ENCODE measurements at regions of chr19 and their contacts with region 1.

Region 1: DNA sequence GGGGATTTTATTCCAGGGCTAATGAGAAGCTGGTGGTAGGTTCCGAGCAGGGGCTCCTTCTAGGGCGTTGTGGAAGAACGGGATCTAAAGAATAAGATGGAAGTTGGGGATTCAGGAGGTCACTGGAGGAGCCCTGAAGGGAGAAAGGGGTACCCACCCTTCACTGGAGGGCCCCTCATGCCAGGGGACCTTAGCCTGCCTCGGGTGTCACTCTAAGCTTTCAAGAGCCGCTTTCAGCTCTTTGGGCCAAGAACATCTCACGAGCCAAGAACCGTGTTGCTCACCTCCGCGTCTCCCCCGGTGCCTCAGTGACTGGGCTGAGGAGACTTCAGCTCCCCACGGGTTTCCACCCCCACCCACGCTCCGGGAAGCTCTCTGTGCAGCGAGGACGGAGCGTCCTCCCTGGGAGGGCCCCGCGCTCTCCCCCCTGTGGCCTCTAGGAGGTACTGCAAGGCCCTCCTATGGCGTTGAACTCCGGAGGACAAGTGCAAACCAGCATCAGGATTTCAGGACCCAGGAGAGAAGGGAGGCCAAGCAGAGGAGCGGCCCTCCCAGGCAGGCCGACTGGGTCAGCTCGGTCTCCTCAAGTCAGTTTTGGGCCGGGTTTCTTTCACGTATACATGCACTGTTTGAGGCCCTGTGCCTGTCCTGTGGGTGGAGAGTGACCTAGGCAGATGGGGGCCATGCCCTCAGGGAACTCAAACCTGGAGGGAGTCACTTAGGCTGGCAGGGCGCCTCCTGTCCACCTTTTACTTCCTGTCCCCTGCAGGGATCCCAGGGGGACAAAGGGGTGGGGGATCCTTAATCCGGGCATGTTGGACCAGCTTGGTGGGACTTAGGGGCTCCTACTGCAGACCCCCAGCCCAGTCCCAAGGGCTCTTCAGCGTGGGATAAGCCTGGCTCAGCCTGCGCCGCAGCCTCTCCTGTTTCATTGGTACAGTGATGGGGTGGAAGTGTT is 5.1 kb upstream of the KRTDAP start:
- DNase-seq: peak; percentile 64 to 68 (median 66)
- ATAC-seq: peak; percentile 94
- H3K4me3 ChIP-seq: no peak overlapping the region
- H3K27ac ChIP-seq: no peak overlapping the region
- H3K4me1 ChIP-seq: peaks cover 7% of the 10 kb centered on the region
- H3K27me3 ChIP-seq: no peaks in the 10 kb centered on the region
- CTCF ChIP-seq: peak; percentile 92 to 99 (median 95)
- POLR2A ChIP-seq: no peak

Region 2: DNA sequence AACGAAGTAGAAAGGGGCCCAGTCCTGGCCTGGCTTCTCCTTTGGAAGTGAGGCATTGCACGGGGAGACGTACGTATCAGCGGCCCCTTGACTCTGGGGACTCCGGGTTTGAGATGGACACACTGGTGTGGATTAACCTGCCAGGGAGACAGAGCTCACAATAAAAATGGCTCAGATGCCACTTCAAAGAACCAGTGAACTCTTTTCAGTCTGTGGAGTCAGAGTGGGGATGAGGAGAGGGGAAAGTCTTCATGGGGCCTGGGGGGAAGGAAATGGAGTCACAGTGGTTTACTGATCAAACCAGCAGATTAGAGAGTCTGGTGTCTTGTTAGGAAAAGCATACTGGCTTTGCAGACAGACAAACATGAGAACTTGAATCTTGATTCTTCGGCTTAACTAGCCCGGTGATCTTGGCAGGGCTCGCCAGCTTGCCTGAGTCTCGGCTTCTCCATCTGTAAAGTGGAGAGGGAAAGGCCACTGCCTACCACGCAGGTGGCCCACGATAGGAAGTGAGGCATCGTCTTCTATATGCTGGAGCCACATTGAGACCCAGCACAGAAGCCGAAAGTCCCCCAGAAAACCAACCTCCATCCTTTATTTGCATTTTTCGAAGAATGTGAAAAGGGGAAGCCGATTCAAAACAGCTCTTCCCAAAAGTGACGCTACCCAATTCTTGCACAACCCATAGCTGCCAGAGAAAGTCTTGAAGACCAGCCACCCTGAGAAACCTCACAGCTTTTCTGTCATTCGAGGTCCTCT is 148.0 kb before region 1 on chr19 and contains the start of gene FFAR1:
- intact Hi-C with region 1: loop called (anchors 10 kb)
- DNase-seq: peak in 2 of 4 donors; percentile 7 to 68
- ATAC-seq: no peak
- H3K4me3 ChIP-seq: no peak within 1 kb of the TSS
- H3K27ac ChIP-seq: peak within 1 kb of the TSS in 1 of 4 donors; percentile 14
- H3K4me1 ChIP-seq: no peaks in the 10 kb centered on the region
- H3K27me3 ChIP-seq: peaks cover 0 to 6% of the 10 kb centered on the region in 2 donors
- CTCF ChIP-seq: no peak
- POLR2A ChIP-seq: no peak
- total RNA-seq, gene FFAR1: 1.6 to 2.3 TPM

Region 3: DNA sequence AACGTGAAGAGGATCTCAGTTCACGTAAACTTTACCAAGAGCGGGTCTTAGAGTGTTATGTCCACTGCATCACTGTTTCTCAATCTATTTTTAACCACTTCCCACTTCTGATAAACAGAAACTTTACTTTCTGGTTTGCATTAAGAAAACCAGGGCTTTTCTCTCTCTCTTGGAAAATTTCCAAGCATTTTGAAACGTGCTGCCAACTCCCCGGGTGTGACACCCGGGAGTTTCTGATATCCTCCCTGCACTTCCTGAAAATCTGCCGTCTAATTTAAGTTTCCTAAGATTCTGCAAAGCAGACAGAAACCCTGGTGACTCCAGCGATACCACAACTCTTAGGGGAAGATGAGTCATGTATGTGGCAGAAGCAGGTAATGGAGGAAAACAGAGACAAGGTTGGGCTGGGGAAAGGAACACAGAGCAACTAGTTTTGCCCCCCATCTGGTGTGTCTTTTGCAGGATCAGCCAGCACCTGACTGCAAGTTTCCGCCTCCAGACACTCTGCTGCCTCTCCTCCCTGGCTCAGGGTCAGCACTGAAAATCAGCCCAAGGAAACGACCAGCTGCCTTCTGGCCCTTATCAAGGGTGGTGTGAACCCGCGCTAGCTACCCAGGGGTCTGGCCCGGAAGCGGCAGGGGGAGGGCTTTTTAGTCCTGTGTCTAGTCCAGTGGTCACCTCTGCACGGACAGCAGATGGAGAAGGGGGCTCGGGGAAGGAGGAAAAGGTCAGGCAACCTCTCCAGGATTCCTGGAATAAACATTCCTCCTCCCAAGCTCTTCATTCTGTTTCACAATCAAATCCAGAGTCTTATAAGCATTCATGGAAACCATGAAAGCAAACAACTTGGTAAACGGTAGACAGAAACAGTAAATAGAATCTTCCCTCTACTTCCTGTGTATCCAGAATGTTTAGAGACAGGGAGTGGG is 58.6 kb before region 1 on chr19:
- intact Hi-C with region 1: no loop called
- DNase-seq: peak in 3 of 4 donors; percentile 42 to 60 (median 56)
- ATAC-seq: peak; percentile 25
- H3K4me3 ChIP-seq: no peak overlapping the region
- H3K27ac ChIP-seq: peak overlapping the region; percentile 61 to 72 (median 68)
- H3K4me1 ChIP-seq: peaks cover 53% of the 10 kb centered on the region
- H3K27me3 ChIP-seq: no peaks in the 10 kb centered on the region
- CTCF ChIP-seq: no peak
- POLR2A ChIP-seq: no peak

Region 4: DNA sequence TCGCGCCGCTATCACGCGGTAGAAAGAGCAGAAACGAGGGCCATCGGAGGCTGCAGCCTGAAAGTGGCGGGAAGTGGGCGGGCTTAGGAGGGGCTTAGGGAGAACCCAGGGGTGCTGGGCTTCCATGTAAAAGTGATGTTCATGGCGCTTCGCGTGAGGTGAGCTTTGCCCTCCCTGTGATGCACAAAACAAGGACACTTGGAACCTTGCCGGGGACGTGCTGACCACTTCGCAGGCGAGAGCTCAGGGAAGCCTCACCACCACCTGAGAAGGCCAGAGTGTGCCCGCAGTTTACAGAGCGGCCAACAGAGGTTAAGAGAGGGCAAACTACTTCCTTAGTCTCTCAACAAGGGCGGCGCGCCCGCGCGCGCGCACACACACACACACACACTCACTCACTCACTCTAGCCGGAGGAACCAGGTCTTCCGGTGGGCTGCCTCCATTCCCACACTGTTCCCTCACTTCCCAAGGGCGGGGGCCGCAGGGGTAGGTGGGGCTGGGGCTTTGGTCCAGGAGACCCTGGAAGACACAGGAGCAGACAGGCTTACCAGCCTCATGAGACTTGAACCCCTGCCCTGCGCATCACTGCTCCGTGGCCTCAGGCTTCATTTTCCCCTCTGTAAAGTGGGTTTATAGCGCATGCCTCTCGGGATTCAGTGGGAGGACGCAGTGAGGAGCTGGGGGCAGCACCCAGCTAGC is 38.6 kb after region 1 on chr19:
- intact Hi-C with region 1: no loop called
- DNase-seq: peak in 3 of 4 donors; percentile 33 to 59 (median 46)
- ATAC-seq: no peak
- H3K4me3 ChIP-seq: no peak overlapping the region
- H3K27ac ChIP-seq: no peak overlapping the region
- H3K4me1 ChIP-seq: peaks cover 9% of the 10 kb centered on the region
- H3K27me3 ChIP-seq: no peaks in the 10 kb centered on the region
- CTCF ChIP-seq: no peak
- POLR2A ChIP-seq: no peak

Region 5: DNA sequence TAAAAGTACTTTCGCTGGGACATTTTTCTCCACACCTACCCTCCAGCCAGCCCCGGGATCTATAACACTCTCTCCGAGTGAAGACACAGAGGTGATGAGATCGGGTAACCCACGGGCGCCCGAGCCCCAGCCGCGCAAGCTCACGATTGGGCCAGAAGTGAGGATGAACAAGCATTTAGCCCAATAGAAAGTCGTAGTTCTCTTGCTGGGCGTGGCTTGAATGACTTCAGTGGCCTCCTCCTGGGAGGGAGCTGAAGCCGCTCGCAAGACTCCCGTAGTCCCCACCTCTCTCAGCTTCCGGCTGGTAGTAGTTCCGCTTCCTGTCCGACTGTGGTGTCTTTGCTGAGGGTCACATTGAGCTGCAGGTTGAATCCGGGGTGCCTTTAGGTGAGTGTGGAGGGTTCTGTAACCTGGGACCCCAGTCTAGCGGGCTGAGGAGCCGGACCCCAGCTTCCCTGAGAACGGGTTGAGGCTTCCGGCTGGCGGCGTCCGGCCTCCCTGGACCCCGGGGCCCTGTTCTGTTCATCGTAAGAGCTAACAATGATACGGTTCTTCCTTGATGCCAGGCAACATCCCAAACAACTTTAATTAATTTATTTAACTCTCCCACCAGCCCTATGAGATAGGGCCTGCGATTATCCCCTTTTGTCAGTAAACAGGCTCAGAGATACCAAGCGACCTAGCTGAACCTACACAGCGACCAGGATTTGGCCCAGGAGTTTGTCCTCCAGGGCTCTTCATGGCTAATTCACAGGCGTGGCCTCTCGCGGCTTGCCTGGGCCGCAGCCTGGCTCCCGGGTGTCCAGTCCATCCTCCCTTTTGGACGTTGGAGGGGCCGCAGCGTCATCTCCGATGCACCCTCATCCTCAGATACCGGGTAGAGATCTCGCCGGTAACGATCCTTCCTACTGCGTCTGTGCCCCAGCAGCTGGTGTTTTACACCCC is 152.9 kb after region 1 on chr19 and contains the start of gene COX6B1:
- intact Hi-C with region 1: no loop called
- DNase-seq: peak; percentile 93 to 98 (median 97)
- ATAC-seq: peak; percentile 68
- H3K4me3 ChIP-seq: peak within 1 kb of the TSS; percentile 57 to 79
- H3K27ac ChIP-seq: peak within 1 kb of the TSS; percentile 32 to 86 (median 74)
- H3K4me1 ChIP-seq: peaks cover 27% of the 10 kb centered on the region
- H3K27me3 ChIP-seq: no peaks in the 10 kb centered on the region
- CTCF ChIP-seq: peak in 1 of 7 experiments; percentile 8
- POLR2A ChIP-seq: peak; percentile 64 to 90 (median 88)
- total RNA-seq, gene COX6B1: 134 to 151 TPM

Measured in body of pancreas (tissue), 4 donors.